Spleen (tissue), 13 donors: ENCODE measurements at regions of chr5 and their contacts with region 1.

Region 1: DNA sequence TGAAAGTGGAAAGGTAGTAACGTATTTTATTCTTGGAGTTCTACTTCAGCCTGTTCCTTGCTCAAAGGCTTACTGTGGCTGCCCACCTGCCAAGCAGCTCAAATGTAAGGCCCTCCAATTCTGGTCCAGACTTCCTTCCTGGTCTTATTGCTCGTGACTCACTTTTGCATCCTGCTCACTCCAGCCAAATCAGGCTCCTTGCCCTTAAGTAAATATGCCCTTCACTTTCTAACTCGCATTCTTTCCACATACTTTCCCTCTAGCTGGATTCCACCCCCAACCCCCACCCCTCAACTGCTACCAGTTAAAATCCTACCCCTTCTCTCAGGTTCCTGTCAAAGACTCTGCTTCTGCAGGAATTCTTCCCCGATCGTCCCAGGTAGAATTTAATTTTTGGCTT is 96.6 kb downstream of the GALNT10 start:
- DNase-seq: no peak
- H3K4me3 ChIP-seq: no peak overlapping the region
- H3K27ac ChIP-seq: peak overlapping the region in 7 of 8 donors; percentile 28 to 73 (median 51)
- H3K4me1 ChIP-seq: peaks cover 0 to 66% (median 31%) of the 10 kb centered on the region in 6 donors
- H3K27me3 ChIP-seq: no peaks in the 10 kb centered on the region
- CTCF ChIP-seq: no peak
- POLR2A ChIP-seq: no peak

Region 2: GRCh38 chr5:154189819-154190594 is 97.1 kb before region 1 on chr5:
- intact Hi-C with region 1: loop called (anchors 10 kb)
- DNase-seq: peak; percentile 98
- H3K4me3 ChIP-seq: peak overlapping the region; percentile 70 to 96 (median 90)
- H3K27ac ChIP-seq: peak overlapping the region; percentile 74 to 95 (median 90)
- H3K4me1 ChIP-seq: peaks cover 11 to 59% (median 41%) of the 10 kb centered on the region in 6 donors
- H3K27me3 ChIP-seq: peaks cover 0 to 7% (median 0%) of the 10 kb centered on the region in 7 donors
- CTCF ChIP-seq: peak in 10 of 11 experiments; percentile 12 to 63 (median 52)
- POLR2A ChIP-seq: no peak